ENCODE measurements at regions of chr1 and their contacts with region 1.

Region 1: GRCh38 chr1:31626223-31627207 is 9.0 kb downstream of the HCRTR1 start:
- DNase-seq: no peak
- H3K4me3 ChIP-seq: no peak overlapping the region
- H3K27ac ChIP-seq: no peak overlapping the region; the same call in 1 of the 2 replicates
- H3K4me1 ChIP-seq: peaks cover 0 to 4% (median 0%) of the 10 kb centered on the region in 4 experiments; a peak in 1 of 7 replicates
- H3K27me3 ChIP-seq: no peaks in the 10 kb centered on the region
- CTCF ChIP-seq: no peak
- EP300 ChIP-seq: no peak
- POLR2A ChIP-seq: no peak
- RAD21 ChIP-seq: no peak

Region 2: GRCh38 chr1:31639543-31639942 is 13.0 kb after region 1 on chr1:
- CTCF ChIA-PET with region 1: interaction called, 40 read pairs
- POLR2A ChIA-PET with region 1: interaction called, 7 read pairs
- DNase-seq: no peak
- H3K4me3 ChIP-seq: no peak overlapping the region
- H3K27ac ChIP-seq: no peak overlapping the region
- H3K4me1 ChIP-seq: peaks cover 3 to 14% (median 6%) of the 10 kb centered on the region in 4 experiments; a peak in 4 of 7 replicates
- H3K27me3 ChIP-seq: no peaks in the 10 kb centered on the region
- CTCF ChIP-seq: no peak
- EP300 ChIP-seq: no peak
- POLR2A ChIP-seq: no peak
- RAD21 ChIP-seq: no peak